A549 (cell line): ENCODE measurements at regions of chr9 and their contacts with region 1.

Region 1: GRCh38 chr9:126965541-126966428 is 51.2 kb downstream of the RALGPS1 start:
- DNase-seq: peak; percentile 67 to 80
- ATAC-seq: peak; percentile 99 to 100
- H3K4me3 ChIP-seq: no peak overlapping the region
- H3K27ac ChIP-seq: no peak overlapping the region
- H3K4me1 ChIP-seq: peaks cover 4% of the 10 kb centered on the region; the same call in 1 of the 3 replicates
- CTCF ChIP-seq: peak; percentile 87
- EP300 ChIP-seq: no peak
- POLR2A ChIP-seq: no peak
- RAD21 ChIP-seq: peak; percentile 91 to 92

Region 2: DNA sequence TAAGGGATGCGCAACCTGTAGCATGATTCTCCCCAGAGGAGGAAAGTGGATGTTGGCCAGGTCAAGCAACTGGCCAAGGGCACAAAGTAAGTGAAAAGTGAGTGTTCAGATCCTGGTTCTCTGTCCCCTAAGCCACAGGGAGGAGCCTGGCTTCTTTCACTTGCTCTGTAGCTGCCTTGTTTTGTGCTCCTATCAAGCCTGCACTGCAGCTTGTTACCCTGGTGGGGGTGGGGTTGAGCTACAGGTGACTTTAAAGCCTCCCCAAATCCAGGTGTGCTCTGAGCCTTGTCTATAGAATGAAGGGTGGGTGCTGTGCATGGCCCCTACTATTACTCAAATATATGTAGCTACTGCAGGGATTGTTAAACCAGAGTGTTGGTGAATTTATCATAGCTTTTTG is 18.3 kb before region 1 on chr9:
- CTCF ChIA-PET with region 1: interaction called, 59 read pairs
- POLR2A ChIA-PET with region 1: no interaction called
- DNase-seq: no peak
- ATAC-seq: peak in 1 of 2 experiments; percentile 42; a peak in 1 of 6 replicates
- H3K4me3 ChIP-seq: no peak overlapping the region
- H3K27ac ChIP-seq: no peak overlapping the region
- H3K4me1 ChIP-seq: no peaks in the 10 kb centered on the region
- CTCF ChIP-seq: no peak
- EP300 ChIP-seq: no peak
- POLR2A ChIP-seq: no peak
- RAD21 ChIP-seq: peak in 1 of 2 experiments; percentile 5; a peak in 1 of 5 replicates

Region 3: GRCh38 chr9:126980231-126980630 is 14.4 kb after region 1 on chr9:
- CTCF ChIA-PET with region 1: interaction called, 23 read pairs
- POLR2A ChIA-PET with region 1: no interaction called
- DNase-seq: no peak
- ATAC-seq: no peak
- H3K4me3 ChIP-seq: no peak overlapping the region
- H3K27ac ChIP-seq: no peak overlapping the region
- H3K4me1 ChIP-seq: peaks cover 9% of the 10 kb centered on the region
- CTCF ChIP-seq: no peak
- EP300 ChIP-seq: no peak
- POLR2A ChIP-seq: no peak
- RAD21 ChIP-seq: no peak

Region 4: DNA sequence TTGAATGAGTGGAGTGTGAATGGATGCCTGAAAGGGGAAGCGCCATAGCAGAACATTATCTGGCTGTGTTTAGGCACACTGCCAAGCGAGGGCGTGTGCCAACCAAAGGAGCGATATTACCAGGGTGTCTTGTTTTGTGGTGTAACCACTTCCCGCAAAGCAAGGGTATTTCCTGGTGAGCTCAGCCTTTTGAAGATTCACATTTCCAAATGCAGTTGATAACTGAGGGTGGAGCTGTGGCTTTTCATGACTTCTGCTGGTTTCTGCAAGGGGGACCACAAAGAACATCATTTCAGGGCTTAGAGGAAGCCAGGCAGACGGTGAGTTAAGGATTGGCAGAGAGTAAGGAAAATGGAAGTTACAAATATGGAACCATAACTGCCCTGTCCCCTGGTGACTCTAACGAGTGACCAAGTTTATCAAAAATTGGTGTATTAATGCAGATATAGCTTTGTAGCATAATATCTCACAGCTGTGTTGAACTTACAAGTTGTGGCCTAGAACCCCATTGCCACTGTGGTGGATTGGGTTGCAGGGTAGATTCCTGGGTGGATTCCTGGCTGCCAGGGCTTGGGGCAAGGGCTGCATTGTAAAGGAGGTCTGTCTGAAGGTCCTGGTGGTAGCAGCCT is 20.2 kb after region 1 on chr9:
- CTCF ChIA-PET with region 1: interaction called, 23 read pairs
- POLR2A ChIA-PET with region 1: no interaction called
- DNase-seq: peak; percentile 24 to 67
- ATAC-seq: peak; percentile 21 to 66; a peak in 4 of 6 replicates
- H3K4me3 ChIP-seq: no peak overlapping the region
- H3K27ac ChIP-seq: peak overlapping the region; percentile 54 to 58
- H3K4me1 ChIP-seq: peaks cover 31% of the 10 kb centered on the region
- CTCF ChIP-seq: no peak
- EP300 ChIP-seq: no peak
- POLR2A ChIP-seq: no peak
- RAD21 ChIP-seq: 0 out of 5 replicates have a peak, but pooled peaks of 1 of the 2 experiments have one; percentile 16